ENCODE measurements at regions of chr22 and their contacts with region 1.

Region 1: DNA sequence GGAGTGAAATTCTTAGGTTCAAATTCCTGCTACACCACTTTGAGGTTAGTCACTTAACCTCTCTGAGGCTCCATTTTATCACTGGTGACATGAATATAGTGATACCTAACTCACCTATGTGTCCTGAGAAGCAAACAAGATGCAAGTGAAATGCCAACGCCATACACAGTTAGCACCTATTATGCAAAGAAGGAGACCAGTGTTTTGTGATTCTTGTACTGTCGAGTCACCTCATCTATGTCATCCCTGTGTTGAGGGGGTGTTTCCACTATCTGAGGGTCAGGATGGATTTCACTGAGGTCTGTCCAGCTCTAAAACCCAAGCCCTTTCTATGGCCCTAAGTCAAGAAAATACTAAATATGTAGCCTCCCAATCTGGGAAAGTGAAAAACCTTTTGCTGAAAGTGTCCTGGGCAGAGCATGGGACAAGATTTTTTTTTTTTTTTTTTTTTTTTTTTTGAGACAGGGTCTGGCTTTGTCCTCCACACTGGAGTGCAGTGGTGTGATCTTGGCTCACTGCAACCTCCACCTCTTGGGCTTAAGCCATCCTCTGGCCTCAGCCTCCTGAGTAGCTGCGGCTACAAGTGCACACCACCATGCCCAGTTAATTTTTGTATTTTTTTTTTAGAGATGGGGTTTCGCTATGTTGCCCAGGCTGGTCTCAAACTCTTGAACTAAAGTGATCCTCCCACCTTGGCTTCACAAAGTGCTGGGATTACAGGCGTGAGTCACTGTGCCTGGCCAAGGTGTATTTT is 5.0 kb upstream of the MCM5 start:
- DNase-seq: no peak
- H3K4me3 ChIP-seq: no peak overlapping the region
- H3K4me3 Mint-ChIP-seq: no peak overlapping the region
- H3K27ac ChIP-seq: no peak overlapping the region
- H3K27ac Mint-ChIP-seq: no peak overlapping the region
- H3K4me1 ChIP-seq: peaks cover 6% of the 10 kb centered on the region
- H3K4me1 Mint-ChIP-seq: peaks cover 15 to 20% (median 15%) of the 10 kb centered on the region in 3 donors
- H3K27me3 ChIP-seq: no peaks in the 10 kb centered on the region
- H3K27me3 Mint-ChIP-seq: peaks cover under 1 to 5% of the 10 kb centered on the region in 2 donors

Region 2: GRCh38 chr22:35367301-35367886 is 27.6 kb before region 1 on chr22:
- CTCF ChIA-PET with region 1: no interaction called
- POLR2A ChIA-PET with region 1: no interaction called
- DNase-seq: no peak
- H3K4me3 ChIP-seq: no peak overlapping the region
- H3K4me3 Mint-ChIP-seq: no peak overlapping the region
- H3K27ac ChIP-seq: no peak overlapping the region
- H3K27ac Mint-ChIP-seq: no peak overlapping the region
- H3K4me1 ChIP-seq: no peaks in the 10 kb centered on the region
- H3K4me1 Mint-ChIP-seq: peaks cover 3 to 13% (median 6%) of the 10 kb centered on the region in 3 donors
- H3K27me3 ChIP-seq: no peaks in the 10 kb centered on the region
- H3K27me3 Mint-ChIP-seq: peaks cover 18 to 27% of the 10 kb centered on the region in 2 donors

Region 3: DNA sequence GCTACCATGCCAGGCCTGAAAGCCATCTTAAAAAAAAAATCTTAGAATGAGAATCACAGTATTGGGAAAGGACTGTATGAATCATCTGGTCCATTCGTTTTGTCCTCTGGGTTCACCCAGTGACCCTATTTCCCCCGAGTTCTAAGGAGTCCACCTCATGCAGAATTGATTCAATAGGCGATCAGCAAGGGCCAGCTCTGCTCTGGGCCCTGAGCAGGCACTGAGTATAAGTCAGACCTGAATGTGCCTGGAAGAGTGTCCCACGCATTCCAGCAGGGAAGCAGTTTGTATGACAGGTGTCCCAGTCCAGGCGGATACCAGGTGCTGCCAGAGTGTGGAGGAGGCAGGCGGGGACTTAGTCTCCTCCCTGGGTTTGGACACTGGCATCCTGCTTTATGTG is 15.0 kb before region 1 on chr22:
- CTCF ChIA-PET with region 1: no interaction called
- POLR2A ChIA-PET with region 1: interaction called, 11 read pairs
- DNase-seq: no peak
- H3K4me3 ChIP-seq: no peak overlapping the region
- H3K4me3 Mint-ChIP-seq: peak overlapping the region in 2 of 7 donors; percentile 35 to 85
- H3K27ac ChIP-seq: no peak overlapping the region
- H3K27ac Mint-ChIP-seq: no peak overlapping the region
- H3K4me1 ChIP-seq: peaks cover 14% of the 10 kb centered on the region
- H3K4me1 Mint-ChIP-seq: peaks cover 10 to 24% (median 22%) of the 10 kb centered on the region in 3 donors
- H3K27me3 ChIP-seq: peaks cover 9% of the 10 kb centered on the region
- H3K27me3 Mint-ChIP-seq: peaks cover 20 to 29% of the 10 kb centered on the region in 2 donors

Region 4: GRCh38 chr22:35424081-35424480 is 29.1 kb after region 1 on chr22:
- CTCF ChIA-PET with region 1: no interaction called
- POLR2A ChIA-PET with region 1: no interaction called
- DNase-seq: no peak
- H3K4me3 ChIP-seq: no peak overlapping the region
- H3K4me3 Mint-ChIP-seq: no peak overlapping the region
- H3K27ac ChIP-seq: no peak overlapping the region
- H3K27ac Mint-ChIP-seq: no peak overlapping the region
- H3K4me1 ChIP-seq: no peaks in the 10 kb centered on the region
- H3K4me1 Mint-ChIP-seq: peaks cover 0 to 5% (median 0%) of the 10 kb centered on the region in 3 donors
- H3K27me3 ChIP-seq: no peaks in the 10 kb centered on the region
- H3K27me3 Mint-ChIP-seq: peaks cover 0 to 1% of the 10 kb centered on the region in 2 donors